ENCODE measurements at regions of chr15 and their contacts with region 1.

Region 1: GRCh38 chr15:101320501-101321052 is 25.5 kb upstream of the SNRPA1 start:
- DNase-seq: peak; percentile 51 to 67 (median 64)
- H3K4me3 ChIP-seq: peak overlapping the region; percentile 19 to 34
- H3K4me3 Mint-ChIP-seq: peak overlapping the region; percentile 72 to 89 (median 86)
- H3K27ac ChIP-seq: no peak overlapping the region
- H3K27ac Mint-ChIP-seq: peak overlapping the region; percentile 41 to 96 (median 87)
- H3K4me1 ChIP-seq: peaks cover 11% of the 10 kb centered on the region
- H3K4me1 Mint-ChIP-seq: peaks cover 6 to 14% (median 10%) of the 10 kb centered on the region in 4 donors
- H3K27me3 ChIP-seq: no peaks in the 10 kb centered on the region
- H3K27me3 Mint-ChIP-seq: peaks cover 3 to 5% of the 10 kb centered on the region in 2 donors

Region 2: GRCh38 chr15:100383302-100384107 is 937.1 kb before region 1 on chr15:
- CTCF ChIA-PET with region 1: no interaction called
- POLR2A ChIA-PET with region 1: no interaction called
- intact Hi-C with region 1: no loop called
- DNase-seq: peak in 4 of 5 donors; percentile 26 to 39 (median 31)
- H3K4me3 ChIP-seq: no peak overlapping the region
- H3K4me3 Mint-ChIP-seq: no peak overlapping the region
- H3K27ac ChIP-seq: no peak overlapping the region
- H3K27ac Mint-ChIP-seq: peak overlapping the region in 1 of 7 donors; percentile 61
- H3K4me1 ChIP-seq: no peaks in the 10 kb centered on the region
- H3K4me1 Mint-ChIP-seq: peaks cover 0 to 2% (median 0%) of the 10 kb centered on the region in 4 donors
- H3K27me3 ChIP-seq: no peaks in the 10 kb centered on the region
- H3K27me3 Mint-ChIP-seq: peaks cover 1 to 11% of the 10 kb centered on the region in 2 donors

Region 3: DNA sequence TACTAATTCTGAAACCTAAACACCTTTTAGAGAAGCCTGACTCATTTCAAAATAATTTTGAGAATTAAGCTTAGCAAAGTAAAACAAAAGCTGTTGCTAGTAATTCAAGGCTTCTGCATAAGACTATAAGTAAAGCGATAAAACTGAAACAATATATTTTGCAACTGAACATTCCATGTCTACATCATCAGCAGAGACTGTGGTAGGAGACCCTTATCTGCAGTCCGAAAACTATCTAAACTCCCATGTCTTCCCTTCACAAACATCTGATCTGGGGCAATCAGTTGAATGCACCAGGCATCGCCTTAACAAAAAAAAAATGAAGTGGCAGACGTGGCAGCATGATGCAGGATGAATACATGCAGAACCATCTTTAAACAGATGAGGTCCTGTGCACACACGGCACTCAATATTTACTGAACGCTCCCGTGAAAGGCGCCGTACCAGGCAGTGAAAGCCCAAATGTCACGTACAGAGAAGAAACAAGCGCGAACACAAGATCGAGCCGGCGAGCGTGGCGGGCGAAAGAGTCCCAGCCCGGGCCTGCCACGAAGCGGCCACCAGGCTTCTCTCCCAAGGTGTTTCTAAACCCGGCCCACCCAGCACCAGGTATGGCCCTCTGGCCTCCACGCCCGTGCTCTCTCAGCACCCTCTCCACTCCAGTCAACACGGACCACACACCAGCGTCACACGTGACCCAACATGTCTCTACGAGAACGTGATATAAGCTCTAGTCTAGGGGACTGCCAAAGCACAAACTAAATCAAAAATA is 131.8 kb before region 1 on chr15:
- CTCF ChIA-PET with region 1: no interaction called
- POLR2A ChIA-PET with region 1: no interaction called
- intact Hi-C with region 1: no loop called
- DNase-seq: no peak
- H3K4me3 ChIP-seq: no peak overlapping the region
- H3K4me3 Mint-ChIP-seq: peak overlapping the region in 5 of 8 donors; percentile 2 to 46 (median 40)
- H3K27ac ChIP-seq: no peak overlapping the region
- H3K27ac Mint-ChIP-seq: peak overlapping the region in 5 of 7 donors; percentile 7 to 63 (median 36)
- H3K4me1 ChIP-seq: peaks cover 34% of the 10 kb centered on the region
- H3K4me1 Mint-ChIP-seq: peaks cover 38 to 61% (median 47%) of the 10 kb centered on the region in 4 donors
- H3K27me3 ChIP-seq: no peaks in the 10 kb centered on the region
- H3K27me3 Mint-ChIP-seq: no peaks in the 10 kb centered on the region

Region 4: DNA sequence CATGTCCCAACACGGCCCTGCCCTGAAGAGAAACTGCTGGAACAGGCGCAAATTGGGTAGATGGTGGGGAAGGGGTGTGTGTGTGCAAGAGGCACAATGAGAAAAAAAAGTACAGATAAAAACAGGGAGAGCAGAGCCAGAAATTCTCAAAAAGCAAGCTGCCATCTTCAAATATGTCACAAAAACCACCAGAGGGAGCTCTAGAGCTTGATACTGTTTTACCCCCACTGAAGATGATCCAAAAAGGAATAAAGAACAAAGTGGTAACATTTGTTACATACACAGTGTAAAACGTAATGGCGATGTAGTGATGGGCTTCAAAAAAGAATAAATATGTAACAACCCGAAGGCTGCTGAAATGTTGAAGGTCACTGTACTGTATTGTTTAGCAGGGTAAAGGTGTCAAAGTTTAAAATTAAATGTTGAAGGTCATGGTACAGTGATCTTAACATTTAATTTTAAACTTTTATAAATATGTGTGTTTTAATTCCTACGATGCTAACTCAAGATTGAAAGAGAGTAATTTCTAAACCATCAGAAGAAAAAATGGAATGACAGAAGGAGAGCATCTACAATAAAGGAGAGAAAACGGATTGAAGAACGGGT is 31.6 kb before region 1 on chr15:
- CTCF ChIA-PET with region 1: interaction called, 23 read pairs
- POLR2A ChIA-PET with region 1: interaction called, 56 read pairs
- intact Hi-C with region 1: no loop called
- DNase-seq: peak in 4 of 5 donors; percentile 62 to 67 (median 63)
- H3K4me3 ChIP-seq: no peak overlapping the region
- H3K4me3 Mint-ChIP-seq: peak overlapping the region in 2 of 8 donors; percentile 57 to 70
- H3K27ac ChIP-seq: no peak overlapping the region
- H3K27ac Mint-ChIP-seq: peak overlapping the region; percentile 36 to 94 (median 79)
- H3K4me1 ChIP-seq: peaks cover 45% of the 10 kb centered on the region
- H3K4me1 Mint-ChIP-seq: peaks cover 31 to 49% (median 41%) of the 10 kb centered on the region in 4 donors
- H3K27me3 ChIP-seq: no peaks in the 10 kb centered on the region
- H3K27me3 Mint-ChIP-seq: no peaks in the 10 kb centered on the region

Region 5: DNA sequence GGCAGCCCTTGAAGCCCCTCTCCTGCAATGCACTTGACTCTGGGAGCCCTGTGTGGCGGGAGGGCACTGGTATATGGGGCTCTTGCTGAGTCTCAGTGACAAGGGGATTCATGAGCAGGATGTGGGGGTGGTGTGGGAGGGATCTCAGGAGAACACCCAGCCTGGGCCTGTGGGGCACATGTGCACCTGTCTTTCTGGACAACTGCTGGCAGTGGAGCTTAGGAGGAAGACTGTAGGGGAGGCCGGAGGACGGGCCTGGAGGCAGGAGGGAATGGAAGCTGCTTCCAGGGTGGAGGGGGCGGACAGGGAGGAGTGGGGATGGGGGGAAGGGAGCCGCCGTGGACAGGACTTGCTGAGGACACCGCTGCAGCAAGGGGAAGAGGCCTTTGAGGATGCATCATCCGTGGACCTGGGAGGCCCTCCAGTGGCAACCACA is 14.7 kb before region 1 on chr15:
- CTCF ChIA-PET with region 1: interaction called, 17 read pairs
- POLR2A ChIA-PET with region 1: interaction called, 3 read pairs
- intact Hi-C with region 1: no loop called
- DNase-seq: no peak
- H3K4me3 ChIP-seq: no peak overlapping the region
- H3K4me3 Mint-ChIP-seq: no peak overlapping the region
- H3K27ac ChIP-seq: no peak overlapping the region
- H3K27ac Mint-ChIP-seq: no peak overlapping the region
- H3K4me1 ChIP-seq: no peaks in the 10 kb centered on the region
- H3K4me1 Mint-ChIP-seq: no peaks in the 10 kb centered on the region
- H3K27me3 ChIP-seq: no peaks in the 10 kb centered on the region
- H3K27me3 Mint-ChIP-seq: peaks cover 2 to 5% of the 10 kb centered on the region in 2 donors

Region 6: GRCh38 chr15:101333401-101333800 is 12.8 kb after region 1 on chr15:
- CTCF ChIA-PET with region 1: interaction called, 28 read pairs
- POLR2A ChIA-PET with region 1: interaction called, 35 read pairs
- intact Hi-C with region 1: loop called (anchors 1 kb)
- DNase-seq: no peak
- H3K4me3 ChIP-seq: peak overlapping the region in 1 of 2 donors; percentile 43
- H3K4me3 Mint-ChIP-seq: peak overlapping the region in 3 of 8 donors; percentile 26 to 49 (median 43)
- H3K27ac ChIP-seq: peak overlapping the region; percentile 29
- H3K27ac Mint-ChIP-seq: peak overlapping the region; percentile 30 to 96 (median 85)
- H3K4me1 ChIP-seq: peaks cover 20% of the 10 kb centered on the region
- H3K4me1 Mint-ChIP-seq: peaks cover 13 to 35% (median 22%) of the 10 kb centered on the region in 4 donors
- H3K27me3 ChIP-seq: no peaks in the 10 kb centered on the region
- H3K27me3 Mint-ChIP-seq: peaks cover 0 to 2% of the 10 kb centered on the region in 2 donors

Region 7: GRCh38 chr15:101342056-101342455 is 21.5 kb after region 1 on chr15:
- CTCF ChIA-PET with region 1: interaction called, 11 read pairs
- POLR2A ChIA-PET with region 1: no interaction called
- intact Hi-C with region 1: no loop called
- DNase-seq: no peak
- H3K4me3 ChIP-seq: no peak overlapping the region
- H3K4me3 Mint-ChIP-seq: no peak overlapping the region
- H3K27ac ChIP-seq: no peak overlapping the region
- H3K27ac Mint-ChIP-seq: no peak overlapping the region
- H3K4me1 ChIP-seq: no peaks in the 10 kb centered on the region
- H3K4me1 Mint-ChIP-seq: peaks cover 0 to 4% (median 0%) of the 10 kb centered on the region in 4 donors
- H3K27me3 ChIP-seq: peaks cover 4% of the 10 kb centered on the region
- H3K27me3 Mint-ChIP-seq: peaks cover 11 to 22% of the 10 kb centered on the region in 2 donors

Region 8: GRCh38 chr15:101358895-101359294 is 38.3 kb after region 1 on chr15:
- CTCF ChIA-PET with region 1: no interaction called
- POLR2A ChIA-PET with region 1: no interaction called
- intact Hi-C with region 1: no loop called
- DNase-seq: no peak
- H3K4me3 ChIP-seq: no peak overlapping the region
- H3K4me3 Mint-ChIP-seq: no peak overlapping the region
- H3K27ac ChIP-seq: no peak overlapping the region
- H3K27ac Mint-ChIP-seq: no peak overlapping the region
- H3K4me1 ChIP-seq: no peaks in the 10 kb centered on the region
- H3K4me1 Mint-ChIP-seq: no peaks in the 10 kb centered on the region
- H3K27me3 ChIP-seq: no peaks in the 10 kb centered on the region
- H3K27me3 Mint-ChIP-seq: peaks cover 14 to 17% of the 10 kb centered on the region in 2 donors